ENCODE measurements at regions of chr17 and their contacts with region 1.

Region 1: GRCh38 chr17:74904687-74905409 is 11.4 kb upstream of the FADS6 start:
- DNase-seq: no peak
- H3K4me3 ChIP-seq: no peak overlapping the region
- H3K27ac ChIP-seq: no peak overlapping the region
- H3K4me1 ChIP-seq: no peaks in the 10 kb centered on the region
- H3K27me3 ChIP-seq: peaks cover 0 to 13% of the 10 kb centered on the region in 2 donors
- CTCF ChIP-seq: no peak
- POLR2A ChIP-seq: no peak

Region 2: DNA sequence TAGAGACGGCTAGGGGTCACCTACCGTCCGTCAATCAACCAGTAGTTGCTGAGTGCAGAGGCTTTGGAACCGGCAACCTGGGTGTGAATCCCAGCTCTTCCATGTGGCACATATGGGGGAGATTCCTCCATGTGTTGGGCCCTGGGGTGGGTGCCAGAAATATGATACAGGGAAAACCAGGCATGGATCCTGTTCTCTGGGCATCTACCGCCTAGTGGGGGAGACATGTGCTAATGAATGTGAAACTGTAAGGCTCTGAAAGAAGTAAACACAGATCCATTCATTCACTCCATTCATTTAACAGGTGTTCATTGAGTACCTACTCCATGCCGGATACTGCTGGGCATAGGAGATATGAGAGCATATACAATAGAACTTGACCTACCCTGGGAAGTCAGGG is 1221.1 kb before region 1 on chr17:
- intact Hi-C with region 1: loop called (anchors 5 kb)
- DNase-seq: no peak
- H3K4me3 ChIP-seq: no peak overlapping the region
- H3K27ac ChIP-seq: no peak overlapping the region
- H3K4me1 ChIP-seq: no peaks in the 10 kb centered on the region
- H3K27me3 ChIP-seq: peaks cover 0 to 5% of the 10 kb centered on the region in 2 donors
- CTCF ChIP-seq: no peak
- POLR2A ChIP-seq: no peak

Region 3: GRCh38 chr17:74840989-74841666 is 63.7 kb before region 1 on chr17:
- intact Hi-C with region 1: no loop called
- DNase-seq: peak in 1 of 2 donors; percentile 39
- H3K4me3 ChIP-seq: no peak overlapping the region
- H3K27ac ChIP-seq: peak overlapping the region; percentile 52 to 69
- H3K4me1 ChIP-seq: peaks cover 4 to 12% of the 10 kb centered on the region in 2 donors
- H3K27me3 ChIP-seq: peaks cover 0 to 4% of the 10 kb centered on the region in 2 donors
- CTCF ChIP-seq: no peak
- POLR2A ChIP-seq: no peak